Common myeloid progenitor, CD34-positive (primary cell): ENCODE measurements at regions of chr14 and their contacts with region 1.

Region 1: GRCh38 chr14:76324133-76324532 is 51.8 kb upstream of the ESRRB start:
- DNase-seq: no peak
- H3K4me3 ChIP-seq: no peak overlapping the region
- H3K27ac ChIP-seq: no peak overlapping the region
- H3K4me1 ChIP-seq: peaks cover 0 to 8% (median 3%) of the 10 kb centered on the region in 4 experiments
- H3K27me3 ChIP-seq: peaks cover 3 to 46% (median 8%) of the 10 kb centered on the region in 5 experiments

Region 2: DNA sequence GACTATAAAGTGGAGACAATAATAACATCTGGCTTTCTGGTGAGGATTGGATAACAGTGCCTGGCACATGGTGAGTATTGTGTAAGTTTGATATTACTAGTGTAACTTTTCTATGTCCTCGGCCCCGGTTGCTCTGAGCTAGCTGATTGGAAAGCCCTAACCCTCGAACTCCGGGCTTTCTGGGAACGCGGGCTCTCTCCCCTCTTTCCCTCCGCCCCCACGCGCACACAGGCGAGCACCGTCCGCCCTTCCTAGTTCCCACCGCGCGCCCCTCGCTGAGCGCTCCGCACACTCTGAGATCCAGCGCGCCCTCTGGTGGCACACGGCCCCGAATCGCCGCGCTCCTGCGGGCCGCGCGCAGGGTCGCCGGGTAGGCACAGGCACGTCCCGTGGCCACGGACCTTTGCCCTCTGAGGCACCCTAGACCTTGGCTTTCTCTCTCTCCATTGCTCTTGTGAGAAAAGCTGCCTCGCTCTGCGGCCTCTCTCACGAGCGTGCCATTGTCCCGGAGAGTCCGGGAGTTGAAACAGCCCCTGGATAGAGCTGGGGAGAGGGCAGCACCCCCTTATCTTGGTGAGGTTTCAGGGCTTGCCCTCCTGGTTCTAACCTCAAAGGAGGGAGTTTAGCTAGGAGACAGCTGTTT is 28.6 kb after region 1 on chr14:
- CTCF ChIA-PET with region 1: interaction called, 12 read pairs
- POLR2A ChIA-PET with region 1: no interaction called
- DNase-seq: peak; percentile 54 to 69 (median 68)
- H3K4me3 ChIP-seq: peak overlapping the region in 3 of 7 experiments; percentile 21 to 57 (median 43)
- H3K27ac ChIP-seq: no peak overlapping the region
- H3K4me1 ChIP-seq: peaks cover 0 to 4% (median 1%) of the 10 kb centered on the region in 4 experiments
- H3K27me3 ChIP-seq: peaks cover 0 to 65% (median 13%) of the 10 kb centered on the region in 5 experiments

Region 3: GRCh38 chr14:76456200-76456599 is 132.1 kb after region 1 on chr14:
- CTCF ChIA-PET with region 1: no interaction called
- POLR2A ChIA-PET with region 1: no interaction called
- DNase-seq: peak; percentile 40 to 66 (median 40)
- H3K4me3 ChIP-seq: no peak overlapping the region
- H3K27ac ChIP-seq: no peak overlapping the region
- H3K4me1 ChIP-seq: no peaks in the 10 kb centered on the region
- H3K27me3 ChIP-seq: peaks cover 0 to 2% (median 0%) of the 10 kb centered on the region in 5 experiments